ENCODE measurements at regions of chr15 and their contacts with region 1.

Region 1: DNA sequence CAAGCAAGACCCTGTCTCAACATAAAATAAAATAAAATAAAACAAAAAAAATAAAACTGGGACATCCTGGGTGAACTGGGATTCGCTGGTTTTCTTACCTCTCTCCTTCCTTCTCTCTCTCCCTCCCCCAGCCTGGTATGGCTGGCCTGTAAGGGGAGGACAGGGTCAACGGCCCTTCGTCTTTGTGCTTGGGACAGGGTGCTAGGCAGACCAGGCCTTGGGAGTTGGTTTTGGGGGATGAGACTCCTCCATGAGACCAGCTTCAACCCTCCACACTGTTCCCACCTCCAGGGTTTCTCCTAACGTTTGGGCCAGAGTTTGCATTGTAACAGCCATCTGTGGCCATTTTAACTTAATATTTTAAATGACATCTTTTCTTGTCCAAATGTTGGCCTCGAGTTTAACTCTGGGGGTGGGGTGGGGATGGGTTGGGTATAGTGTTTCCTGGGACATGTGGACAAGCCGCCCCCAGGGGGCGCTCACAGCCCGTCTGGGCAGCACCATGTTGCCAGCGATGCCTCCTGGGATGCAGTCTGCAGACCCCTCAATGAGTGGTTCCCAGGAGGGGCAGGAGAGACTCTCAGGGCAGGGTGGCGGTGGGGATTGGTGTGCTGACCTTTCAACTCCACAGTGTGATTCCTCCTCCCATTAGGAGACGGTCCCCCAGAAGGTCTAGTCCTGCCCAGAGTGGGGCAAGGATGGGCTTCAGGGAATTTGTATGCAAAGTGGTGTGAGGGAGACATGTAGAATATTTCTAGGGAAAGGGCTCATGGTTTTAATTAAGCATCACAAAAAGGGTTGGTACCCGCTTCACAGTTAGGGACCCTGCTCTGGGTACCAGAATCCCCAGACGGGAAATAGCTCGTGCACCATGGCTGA is 37.7 kb upstream of the LCTL start:
- DNase-seq: peak; percentile 82
- ATAC-seq: peak; percentile 86
- H3K4me3 Mint-ChIP-seq: no peak overlapping the region
- H3K27ac Mint-ChIP-seq: no peak overlapping the region
- H3K4me1 Mint-ChIP-seq: peaks cover under 1% of the 10 kb centered on the region
- H3K27me3 Mint-ChIP-seq: peaks cover 4% of the 10 kb centered on the region

Region 2: DNA sequence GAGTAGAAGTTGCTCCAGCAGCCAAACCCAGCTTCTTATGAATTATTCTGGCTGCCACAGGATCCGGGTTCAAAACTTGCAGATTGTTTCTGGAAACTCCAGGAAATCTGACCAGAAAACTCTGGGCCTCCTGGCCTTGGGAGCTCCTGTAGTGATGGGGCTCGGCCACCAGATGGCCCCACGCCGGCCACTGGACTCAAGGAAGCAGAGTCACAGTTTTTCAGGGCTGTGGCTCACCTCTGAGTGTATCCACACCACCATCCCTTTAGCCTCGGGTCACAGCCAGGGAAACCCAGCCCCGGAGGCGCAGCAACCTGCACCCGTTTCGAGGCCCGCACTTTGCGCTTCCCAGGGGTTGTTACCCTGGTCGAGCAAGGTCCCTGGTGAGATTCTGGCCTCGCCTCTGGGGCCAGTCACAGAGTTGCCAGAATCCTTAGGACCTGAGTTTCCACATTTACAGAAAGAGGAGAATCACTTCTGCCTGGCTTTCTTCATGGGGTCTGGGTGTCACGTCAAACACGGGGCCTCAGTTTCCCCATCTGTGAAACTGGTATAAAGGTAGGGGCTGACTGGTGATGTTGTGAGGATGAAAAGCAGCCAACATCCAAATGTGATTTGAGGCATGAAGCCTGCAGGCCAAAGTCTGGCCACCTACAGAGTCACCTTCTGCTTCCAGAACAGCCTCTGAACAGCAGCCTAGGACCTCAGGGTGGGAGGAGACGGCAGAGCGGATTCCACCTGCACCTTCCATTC is 15.8 kb after region 1 on chr15:
- CTCF ChIA-PET with region 1: interaction called, 17 read pairs
- POLR2A ChIA-PET with region 1: no interaction called
- intact Hi-C with region 1: no loop called
- DNase-seq: peak; percentile 70
- ATAC-seq: peak; percentile 65
- H3K4me3 Mint-ChIP-seq: no peak overlapping the region
- H3K27ac Mint-ChIP-seq: no peak overlapping the region
- H3K4me1 Mint-ChIP-seq: no peaks in the 10 kb centered on the region
- H3K27me3 Mint-ChIP-seq: peaks cover 27% of the 10 kb centered on the region

Region 3: GRCh38 chr15:67225336-67225735 is 621.8 kb after region 1 on chr15:
- CTCF ChIA-PET with region 1: no interaction called
- POLR2A ChIA-PET with region 1: no interaction called
- intact Hi-C with region 1: no loop called
- DNase-seq: no peak
- ATAC-seq: no peak
- H3K4me3 Mint-ChIP-seq: no peak overlapping the region
- H3K27ac Mint-ChIP-seq: no peak overlapping the region
- H3K4me1 Mint-ChIP-seq: peaks cover 6% of the 10 kb centered on the region
- H3K27me3 Mint-ChIP-seq: no peaks in the 10 kb centered on the region